ENCODE measurements at regions of chr12 and their contacts with region 1.

Region 1: GRCh38 chr12:69359531-69360347 is at the start of gene YEATS4:
- DNase-seq: peak; percentile 96
- ATAC-seq: peak; percentile 90
- H3K4me3 ChIP-seq: peak within 1 kb of the TSS; percentile 73
- H3K27ac ChIP-seq: peak within 1 kb of the TSS; percentile 93
- H3K4me1 ChIP-seq: peaks cover 20% of the 10 kb centered on the region
- H3K27me3 ChIP-seq: no peaks in the 10 kb centered on the region
- CTCF ChIP-seq: no peak
- total RNA-seq, gene YEATS4: 36.1 and 41.3 TPM in 2 replicates

Region 2: DNA sequence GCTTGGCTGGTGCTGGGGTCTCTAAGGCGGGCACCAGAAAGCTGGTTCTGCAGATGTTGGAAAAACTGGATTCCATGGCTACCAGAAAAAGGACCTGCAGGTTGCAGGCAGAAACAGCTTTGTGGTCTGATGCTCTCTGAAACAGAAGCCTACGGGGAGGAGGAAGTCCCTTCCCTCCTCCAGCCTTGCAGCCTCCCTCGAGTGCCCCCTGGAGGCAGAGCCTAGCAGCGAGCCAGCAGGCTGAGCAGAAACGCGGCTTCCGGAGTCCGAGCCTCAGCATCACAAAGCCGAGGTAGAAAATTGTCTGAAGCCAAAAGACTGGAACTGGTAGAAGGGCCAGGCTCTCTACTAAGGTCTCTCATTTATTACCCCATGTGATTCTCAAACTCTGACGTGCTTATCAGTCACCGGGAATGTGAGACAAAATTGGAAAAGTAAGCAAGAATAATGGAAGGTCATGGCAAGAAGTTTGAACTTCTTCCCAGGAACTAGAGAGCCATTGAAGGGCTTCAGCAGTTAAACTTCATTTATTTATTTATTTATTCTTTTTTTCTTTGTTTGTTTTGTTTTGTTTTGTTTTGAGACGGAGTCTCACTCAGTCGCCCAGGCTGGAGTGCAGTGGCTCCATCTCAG is 202.6 kb before region 1 on chr12:
- CTCF ChIA-PET with region 1: no interaction called
- POLR2A ChIA-PET with region 1: no interaction called
- intact Hi-C with region 1: loop called (anchors 2 kb)
- DNase-seq: peak; percentile 89
- ATAC-seq: peak; percentile 91
- H3K4me3 ChIP-seq: no peak overlapping the region
- H3K27ac ChIP-seq: no peak overlapping the region
- H3K4me1 ChIP-seq: peaks cover 7% of the 10 kb centered on the region; the same call in 1 of the 2 replicates
- H3K27me3 ChIP-seq: no peaks in the 10 kb centered on the region
- CTCF ChIP-seq: peak; percentile 95

Region 3: GRCh38 chr12:69290545-69291277 is 69.0 kb before region 1 on chr12:
- CTCF ChIA-PET with region 1: interaction called, 5 read pairs
- POLR2A ChIA-PET with region 1: no interaction called
- intact Hi-C with region 1: loop called (anchors 2 kb)
- DNase-seq: peak; percentile 90
- ATAC-seq: peak; percentile 100
- H3K4me3 ChIP-seq: no peak overlapping the region
- H3K27ac ChIP-seq: no peak overlapping the region
- H3K4me1 ChIP-seq: no peaks in the 10 kb centered on the region
- H3K27me3 ChIP-seq: peaks cover 3% of the 10 kb centered on the region; the same call in 1 of the 2 replicates
- CTCF ChIP-seq: peak; percentile 96

Region 4: GRCh38 chr12:69490920-69491643 is 131.3 kb after region 1 on chr12:
- CTCF ChIA-PET with region 1: no interaction called
- POLR2A ChIA-PET with region 1: no interaction called
- intact Hi-C with region 1: no loop called
- DNase-seq: no peak
- ATAC-seq: no peak
- H3K4me3 ChIP-seq: no peak overlapping the region
- H3K27ac ChIP-seq: no peak overlapping the region
- H3K4me1 ChIP-seq: no peaks in the 10 kb centered on the region
- H3K27me3 ChIP-seq: no peaks in the 10 kb centered on the region
- CTCF ChIP-seq: no peak

Region 5: GRCh38 chr12:69570545-69571399 is 211.0 kb after region 1 on chr12:
- CTCF ChIA-PET with region 1: interaction called, 37 read pairs
- POLR2A ChIA-PET with region 1: no interaction called
- intact Hi-C with region 1: loop called (anchors 1 kb)
- DNase-seq: peak; percentile 83
- ATAC-seq: no peak
- H3K4me3 ChIP-seq: peak overlapping the region; percentile 52
- H3K27ac ChIP-seq: peak overlapping the region; percentile 90
- H3K4me1 ChIP-seq: peaks cover 30% of the 10 kb centered on the region
- H3K27me3 ChIP-seq: no peaks in the 10 kb centered on the region
- CTCF ChIP-seq: peak; percentile 88

Region 6: GRCh38 chr12:69639400-69640016 is 279.8 kb after region 1 on chr12:
- CTCF ChIA-PET with region 1: interaction called, 10 read pairs
- POLR2A ChIA-PET with region 1: no interaction called
- intact Hi-C with region 1: loop called (anchors 1 kb)
- DNase-seq: peak; percentile 82
- ATAC-seq: peak; percentile 97
- H3K4me3 ChIP-seq: no peak overlapping the region
- H3K27ac ChIP-seq: no peak overlapping the region
- H3K4me1 ChIP-seq: no peaks in the 10 kb centered on the region
- H3K27me3 ChIP-seq: no peaks in the 10 kb centered on the region
- CTCF ChIP-seq: peak; percentile 93

Region 7: GRCh38 chr12:69834147-69834546 is 474.4 kb after region 1 on chr12:
- CTCF ChIA-PET with region 1: interaction called, 14 read pairs
- POLR2A ChIA-PET with region 1: no interaction called
- intact Hi-C with region 1: no loop called
- DNase-seq: no peak
- ATAC-seq: no peak
- H3K4me3 ChIP-seq: no peak overlapping the region
- H3K27ac ChIP-seq: no peak overlapping the region
- H3K4me1 ChIP-seq: no peaks in the 10 kb centered on the region
- H3K27me3 ChIP-seq: no peaks in the 10 kb centered on the region
- CTCF ChIP-seq: no peak

Region 8: DNA sequence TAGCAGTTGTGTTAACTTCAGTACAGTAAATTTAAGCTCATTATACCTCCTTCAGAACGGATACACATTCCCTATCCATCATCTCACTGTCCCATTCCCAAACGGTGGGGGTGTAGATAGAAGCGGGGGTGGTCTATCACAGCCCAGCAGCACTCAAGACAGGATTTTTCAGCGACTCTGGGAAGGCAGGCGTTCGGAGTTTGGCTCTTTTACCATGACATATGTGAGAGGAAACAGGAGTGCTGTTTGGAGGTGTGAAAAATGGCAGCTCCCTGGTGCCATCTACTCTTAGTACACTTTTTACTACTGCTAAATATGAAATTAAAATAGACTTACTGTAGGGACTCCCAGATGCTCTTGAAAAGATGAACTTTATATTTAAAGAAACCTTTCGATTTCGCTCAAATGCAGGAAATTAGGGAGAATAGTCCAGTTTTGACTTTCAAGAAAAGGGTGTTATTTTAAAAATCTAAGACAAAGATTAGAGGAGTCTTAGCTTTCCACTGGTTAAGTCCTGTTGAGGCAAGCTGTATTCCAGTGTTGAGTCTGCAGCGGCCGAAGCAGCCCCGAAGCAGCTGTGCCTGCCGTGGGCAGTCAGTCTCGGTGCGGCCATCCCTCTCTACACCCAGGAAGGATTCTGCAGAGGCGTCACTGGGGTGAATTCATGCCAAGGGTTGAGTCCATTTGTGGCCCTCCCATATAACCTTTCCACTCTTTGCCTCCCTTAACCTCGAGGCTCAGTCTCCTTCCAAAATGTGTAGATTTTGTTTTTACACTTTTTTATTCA is 1048.5 kb after region 1 on chr12:
- CTCF ChIA-PET with region 1: interaction called, 14 read pairs
- POLR2A ChIA-PET with region 1: no interaction called
- intact Hi-C with region 1: no loop called
- DNase-seq: no peak
- ATAC-seq: no peak
- H3K4me3 ChIP-seq: no peak overlapping the region
- H3K27ac ChIP-seq: no peak overlapping the region
- H3K4me1 ChIP-seq: no peaks in the 10 kb centered on the region
- H3K27me3 ChIP-seq: no peaks in the 10 kb centered on the region
- CTCF ChIP-seq: no peak